Right ventricle myocardium inferior (tissue), 1 donor: ENCODE measurements at regions of chr15 and their contacts with region 1.

Region 1: DNA sequence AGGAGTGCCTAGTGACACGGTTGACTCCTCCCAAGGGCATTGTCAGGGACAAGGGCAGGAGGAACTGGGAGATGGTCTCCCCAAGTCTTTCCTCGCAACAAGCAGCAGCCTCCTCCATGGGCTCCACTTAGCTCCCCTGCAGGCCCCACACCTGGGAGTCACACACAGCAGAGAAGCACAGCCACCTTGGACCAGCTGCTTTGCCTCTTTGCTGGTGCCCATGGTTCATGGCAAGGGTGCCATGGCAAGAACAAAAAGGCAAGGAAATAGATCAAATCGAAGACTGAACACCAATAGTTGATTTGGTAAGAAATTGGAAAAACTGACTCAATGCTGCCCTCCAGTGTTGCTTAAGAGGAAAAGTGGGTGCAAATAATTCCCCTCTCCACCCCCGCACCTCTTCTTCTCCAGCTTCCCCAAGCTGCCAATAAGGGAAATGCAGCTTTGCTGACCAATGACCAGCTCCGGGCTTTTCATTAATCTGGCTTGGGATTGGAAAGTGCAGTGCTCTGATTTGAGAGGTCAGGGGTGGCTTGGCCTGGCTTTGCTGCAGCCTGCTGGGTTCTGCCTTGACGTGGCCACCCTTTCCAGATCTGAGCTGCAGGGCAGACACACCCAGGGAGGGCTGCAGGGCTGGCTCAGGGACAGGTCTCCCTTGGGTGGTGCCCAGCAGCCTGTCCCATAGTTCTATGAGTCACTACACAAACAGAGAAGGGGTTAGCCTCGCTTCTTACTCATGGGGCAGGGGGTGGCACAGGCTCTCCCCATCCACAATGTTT is 162.0 kb downstream of the KLF13 start:
- DNase-seq: peak; percentile 77
- ATAC-seq: peak; percentile 71

Region 2: DNA sequence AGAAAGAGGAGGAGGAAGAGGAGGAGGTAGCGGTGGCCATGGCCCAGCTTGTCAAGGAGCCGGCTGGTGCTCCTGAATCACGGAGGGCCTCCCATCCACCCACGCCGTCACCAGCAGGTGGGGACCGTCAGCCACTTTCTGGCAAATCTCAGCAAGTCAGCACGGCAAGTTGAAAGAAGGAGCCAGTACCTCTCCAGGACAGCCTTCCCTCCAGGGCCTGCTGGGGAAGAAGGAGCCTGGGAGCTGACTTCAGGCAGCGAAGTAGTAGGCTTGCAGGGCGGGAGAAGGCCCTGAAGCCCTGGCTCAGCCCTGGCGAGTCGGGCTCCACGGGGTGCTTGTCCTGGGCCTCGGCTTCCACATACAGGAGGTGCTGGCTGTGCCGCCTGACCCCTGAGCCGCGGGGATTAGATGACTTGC is 287.9 kb before region 1 on chr15:
- intact Hi-C with region 1: loop called (anchors 1 kb)
- DNase-seq: peak; percentile 87
- ATAC-seq: peak; percentile 92

Region 3: DNA sequence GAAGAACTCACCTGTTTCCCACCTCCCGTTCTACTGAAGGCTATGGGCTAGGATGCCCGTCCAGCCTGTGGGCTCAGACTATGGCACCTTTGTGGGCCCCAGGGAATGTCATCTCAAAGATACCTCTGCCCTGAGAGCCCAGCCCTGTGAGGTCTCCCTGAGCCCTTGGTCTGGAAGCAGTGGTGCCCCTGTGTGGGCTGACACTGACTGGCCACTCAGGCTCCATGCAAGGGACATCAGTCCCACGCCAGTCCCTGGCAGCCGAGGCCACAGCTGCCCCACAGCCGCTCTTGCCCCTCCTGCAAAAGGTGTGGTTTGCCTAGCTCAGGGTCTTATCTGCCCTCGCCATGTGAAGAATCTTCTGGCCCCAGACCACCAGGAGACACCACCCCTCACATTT is 55.0 kb before region 1 on chr15:
- intact Hi-C with region 1: no loop called
- DNase-seq: no peak
- ATAC-seq: no peak